ENCODE measurements at regions of chr2 and their contacts with region 1.

Region 1: DNA sequence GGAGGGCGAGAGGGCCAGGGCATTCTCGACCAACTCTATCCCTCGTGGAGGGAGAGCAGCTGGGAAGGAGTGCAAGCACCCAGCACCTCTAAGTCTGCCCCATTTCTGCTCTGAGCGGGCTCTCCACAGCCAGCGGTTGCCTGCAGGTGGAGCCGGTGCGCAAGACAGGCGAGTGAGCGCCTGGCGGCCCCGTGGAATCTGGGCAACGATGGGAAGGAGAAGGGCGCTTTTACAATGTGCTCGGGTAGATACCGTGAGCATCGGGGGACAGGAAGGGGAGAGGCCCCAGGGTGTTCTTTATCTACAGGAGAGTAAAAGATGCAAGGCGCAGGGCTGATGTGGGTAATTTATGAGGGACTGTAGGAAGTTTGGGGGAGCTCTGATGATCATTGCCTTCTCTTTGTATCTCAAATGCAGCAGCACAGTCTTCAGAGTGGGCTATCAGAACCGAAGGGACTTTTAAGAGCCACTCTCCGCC is 867 bp upstream of the TTL start:
- DNase-seq: peak; percentile 80
- H3K4me3 ChIP-seq: peak overlapping the region; percentile 58 to 84 (median 76)
- H3K27ac ChIP-seq: peak overlapping the region; percentile 46
- H3K4me1 ChIP-seq: peaks cover 16% of the 10 kb centered on the region
- H3K27me3 ChIP-seq: no peaks in the 10 kb centered on the region
- CTCF ChIP-seq: peak; percentile 71 to 94

Region 2: DNA sequence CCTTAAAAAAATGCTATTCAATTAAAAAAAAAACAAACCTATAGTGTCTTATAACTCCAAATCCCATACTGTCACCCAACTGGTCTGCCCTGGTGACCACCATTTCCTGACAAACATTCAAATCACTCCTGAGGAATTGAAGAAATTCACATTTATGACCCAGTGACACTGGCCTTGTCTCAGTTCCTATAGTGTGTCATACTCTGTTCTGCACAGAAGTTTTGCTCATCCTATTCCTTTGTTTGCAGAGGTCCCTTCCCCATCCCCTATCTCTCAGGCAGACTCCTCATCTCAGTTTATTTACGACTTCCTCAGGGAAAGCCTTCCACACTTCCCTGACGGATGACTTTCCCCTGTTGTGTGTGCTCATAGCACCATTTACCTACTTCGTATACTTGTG is 191.0 kb before region 1 on chr2:
- CTCF ChIA-PET with region 1: no interaction called
- dilution Hi-C with region 1: no loop called
- in situ Hi-C with region 1: no loop called
- intact Hi-C with region 1: no loop called
- DNase-seq: no peak
- H3K4me3 ChIP-seq: no peak overlapping the region
- H3K27ac ChIP-seq: no peak overlapping the region
- H3K4me1 ChIP-seq: no peaks in the 10 kb centered on the region
- H3K27me3 ChIP-seq: no peaks in the 10 kb centered on the region
- CTCF ChIP-seq: no peak

Region 3: GRCh38 chr2:112465382-112465781 is 15.7 kb before region 1 on chr2:
- CTCF ChIA-PET with region 1: no interaction called
- dilution Hi-C with region 1: no loop called
- in situ Hi-C with region 1: no loop called
- intact Hi-C with region 1: no loop called
- DNase-seq: no peak
- H3K4me3 ChIP-seq: no peak overlapping the region
- H3K27ac ChIP-seq: no peak overlapping the region
- H3K4me1 ChIP-seq: no peaks in the 10 kb centered on the region
- H3K27me3 ChIP-seq: no peaks in the 10 kb centered on the region
- CTCF ChIP-seq: peak; percentile 25 to 45

Region 4: DNA sequence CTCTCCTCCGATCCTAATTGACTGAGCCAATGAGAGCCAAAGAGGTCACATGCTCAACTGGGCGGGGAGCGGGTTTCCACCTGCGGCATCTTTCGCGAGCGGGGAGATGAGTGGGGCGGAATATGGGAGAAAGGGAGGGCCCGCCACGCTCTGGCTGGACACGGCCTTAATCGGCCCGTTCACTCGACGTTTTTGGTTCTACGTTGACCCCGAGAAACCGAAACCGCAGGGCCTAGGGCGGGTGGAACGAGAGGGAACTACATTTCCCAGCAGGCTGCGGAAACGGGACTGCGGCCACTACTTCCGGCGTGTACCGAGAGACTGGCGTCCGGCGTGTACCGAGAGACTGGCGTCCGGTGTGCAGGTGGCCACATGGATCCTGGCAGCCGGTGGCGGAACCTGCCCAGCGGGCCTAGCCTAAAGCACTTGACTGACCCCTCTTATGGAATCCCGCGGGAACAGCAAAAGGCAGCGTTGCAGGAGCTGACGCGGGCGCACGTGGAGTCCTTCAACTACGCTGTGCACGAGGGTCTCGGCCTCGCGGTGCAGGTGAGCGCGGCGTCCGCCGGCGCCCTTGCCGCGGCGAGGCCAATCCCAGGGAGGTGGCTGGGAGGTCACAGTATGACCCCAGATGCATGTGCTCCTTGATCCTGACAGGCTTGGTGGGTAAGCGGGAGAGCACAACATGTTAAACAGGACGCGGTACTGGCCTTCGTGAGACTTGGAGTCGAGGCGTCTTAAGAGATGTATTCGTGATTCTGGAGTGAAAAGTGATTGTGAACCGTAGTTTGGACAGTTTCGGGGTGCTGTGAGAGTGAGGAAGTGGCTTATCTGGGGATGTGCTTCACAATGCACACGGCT is 61.3 kb after region 1 on chr2 and contains the start of gene POLR1B:
- CTCF ChIA-PET with region 1: no interaction called
- dilution Hi-C with region 1: no loop called
- in situ Hi-C with region 1: no loop called
- intact Hi-C with region 1: loop called (anchors 1 kb)
- DNase-seq: peak; percentile 88
- H3K4me3 ChIP-seq: peak within 1 kb of the TSS; percentile 73 to 86 (median 78)
- H3K27ac ChIP-seq: peak within 1 kb of the TSS; percentile 71
- H3K4me1 ChIP-seq: peaks cover 18% of the 10 kb centered on the region
- H3K27me3 ChIP-seq: no peaks in the 10 kb centered on the region
- CTCF ChIP-seq: no peak
- total RNA-seq, gene POLR1B: 23.0 to 41.1 TPM

Region 5: GRCh38 chr2:112584134-112584890 is 103.2 kb after region 1 on chr2 and contains the start of gene CHCHD5:
- CTCF ChIA-PET with region 1: no interaction called
- dilution Hi-C with region 1: no loop called
- in situ Hi-C with region 1: no loop called
- intact Hi-C with region 1: loop called (anchors 1 kb)
- DNase-seq: peak; percentile 97
- H3K4me3 ChIP-seq: peak within 1 kb of the TSS; percentile 67 to 85 (median 72)
- H3K27ac ChIP-seq: peak within 1 kb of the TSS; percentile 98
- H3K4me1 ChIP-seq: peaks cover 21% of the 10 kb centered on the region
- H3K27me3 ChIP-seq: no peaks in the 10 kb centered on the region
- CTCF ChIP-seq: peak in 1 of 2 donors; percentile 16
- total RNA-seq, gene CHCHD5: 10.2 to 42.6 TPM

Measured in mammary epithelial cell (primary cell).